Activated CD4-positive, alpha-beta memory T cell treated with anti-CD3 and anti-CD28 coated beads for 36 hours (primary cell): ENCODE measurements at regions of chr20 and their contacts with region 1.

Region 1: GRCh38 chr20:3010985-3011723 is 32.3 kb upstream of the GNRH2 start:
- DNase-seq: peak; percentile 49
- H3K4me3 Mint-ChIP-seq: no peak overlapping the region
- H3K27ac Mint-ChIP-seq: peak overlapping the region; percentile 97
- H3K4me1 Mint-ChIP-seq: peaks cover 65% of the 10 kb centered on the region
- H3K27me3 Mint-ChIP-seq: no peaks in the 10 kb centered on the region

Region 2: DNA sequence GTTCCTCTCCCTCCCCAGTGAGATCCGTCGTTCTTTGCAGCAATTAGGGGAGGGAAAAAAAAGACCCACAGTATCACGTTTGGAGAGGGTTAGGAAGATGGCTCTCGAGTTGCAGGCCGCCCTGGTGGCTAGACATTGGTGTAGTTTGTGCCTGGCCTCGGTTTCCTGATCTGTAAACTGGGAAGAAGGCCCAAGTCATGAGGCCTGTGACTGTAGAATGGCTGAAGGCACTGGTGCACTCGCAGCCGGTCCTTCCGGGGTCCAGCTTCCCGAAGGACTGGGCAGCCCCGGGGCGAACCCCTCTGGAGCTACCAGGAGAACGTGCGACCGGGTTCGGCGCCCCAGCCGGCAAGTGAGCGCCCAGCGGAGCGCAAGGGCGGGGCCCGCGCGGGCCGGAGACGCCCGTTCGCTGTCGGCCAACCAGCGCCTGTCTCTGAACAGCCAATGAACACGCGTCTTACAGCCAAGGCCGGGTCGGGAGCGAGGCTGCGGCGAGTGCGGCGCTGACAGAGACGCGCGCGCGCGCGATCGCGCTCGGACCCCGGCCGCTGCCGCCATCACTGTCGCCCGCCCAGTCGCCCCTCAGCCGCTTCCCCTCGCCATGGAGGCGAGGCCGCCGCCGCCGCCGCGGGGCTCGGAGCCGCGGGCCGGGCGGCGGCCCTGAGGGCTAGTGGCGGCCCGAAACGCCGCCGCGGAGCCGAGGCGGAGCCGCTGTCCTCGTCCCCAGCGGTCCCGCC is 138.0 kb before region 1 on chr20 and contains the start of gene PTPRA:
- CTCF ChIA-PET with region 1: interaction called, 3 read pairs
- POLR2A ChIA-PET with region 1: interaction called, 10 read pairs
- intact Hi-C with region 1: loop called (anchors 1 kb)
- DNase-seq: peak; percentile 95
- H3K4me3 Mint-ChIP-seq: peak within 1 kb of the TSS; percentile 90
- H3K27ac Mint-ChIP-seq: peak within 1 kb of the TSS; percentile 91
- H3K4me1 Mint-ChIP-seq: peaks cover 43% of the 10 kb centered on the region
- H3K27me3 Mint-ChIP-seq: no peaks in the 10 kb centered on the region
- total RNA-seq, gene PTPRA: 61.1 to 62.8 TPM

Region 3: DNA sequence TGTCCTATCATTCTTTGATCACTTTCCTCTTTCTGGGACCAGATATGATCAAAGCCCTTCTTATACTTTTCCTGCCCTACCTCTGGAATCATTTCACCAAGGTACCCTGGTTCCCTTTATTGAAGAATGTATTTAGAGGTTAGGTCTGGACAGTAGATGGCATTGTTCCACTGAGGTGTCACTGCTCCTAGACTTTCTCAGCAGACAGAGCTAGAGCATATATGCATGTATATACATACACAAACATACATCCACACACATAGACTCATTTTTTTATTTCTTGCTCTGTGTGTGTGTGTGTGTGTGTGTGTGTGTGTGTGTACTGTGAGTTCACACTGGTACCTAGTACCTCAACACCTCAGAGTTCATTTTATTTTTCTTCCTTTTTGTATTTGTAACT is 97.0 kb before region 1 on chr20:
- CTCF ChIA-PET with region 1: no interaction called
- POLR2A ChIA-PET with region 1: interaction called, 3 read pairs
- intact Hi-C with region 1: loop called (anchors 1 kb)
- DNase-seq: no peak
- H3K4me3 Mint-ChIP-seq: no peak overlapping the region
- H3K27ac Mint-ChIP-seq: no peak overlapping the region
- H3K4me1 Mint-ChIP-seq: peaks cover 20% of the 10 kb centered on the region
- H3K27me3 Mint-ChIP-seq: no peaks in the 10 kb centered on the region

Region 4: DNA sequence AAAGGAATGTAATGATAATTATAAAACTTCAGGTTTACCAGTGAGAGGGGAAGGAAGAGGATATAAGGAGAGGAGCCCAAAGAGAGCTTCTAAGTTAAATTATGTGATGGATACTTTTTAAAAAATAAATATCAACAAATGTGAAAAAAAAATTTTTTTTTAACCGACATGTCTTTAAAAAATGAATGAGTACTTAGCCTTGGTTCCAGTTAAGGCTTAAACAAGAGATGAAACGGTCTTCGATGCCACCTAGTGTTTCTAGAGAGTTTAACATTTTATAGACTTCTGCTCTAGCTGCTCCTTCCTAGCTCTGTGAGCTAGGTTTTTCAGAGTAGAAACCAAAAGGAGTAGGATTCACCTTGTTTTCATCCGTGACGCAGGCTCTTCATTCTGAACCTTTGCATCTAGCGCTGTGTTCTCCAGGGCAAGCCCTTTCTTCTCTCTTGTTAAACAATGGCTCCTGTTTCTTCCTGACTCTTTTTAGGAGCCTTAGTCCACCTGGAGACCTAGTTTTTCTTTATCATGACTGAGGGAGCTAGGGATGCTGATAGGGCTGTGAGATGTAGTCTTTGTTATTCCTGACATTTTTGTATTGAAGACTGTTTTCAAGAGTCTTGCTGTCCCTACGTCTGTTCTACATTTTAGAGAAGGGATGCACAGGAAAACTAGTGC is 10.2 kb before region 1 on chr20:
- CTCF ChIA-PET with region 1: interaction called, 18 read pairs
- POLR2A ChIA-PET with region 1: no interaction called
- intact Hi-C with region 1: no loop called
- DNase-seq: no peak
- H3K4me3 Mint-ChIP-seq: no peak overlapping the region
- H3K27ac Mint-ChIP-seq: peak overlapping the region; percentile 51
- H3K4me1 Mint-ChIP-seq: peaks cover 9% of the 10 kb centered on the region
- H3K27me3 Mint-ChIP-seq: no peaks in the 10 kb centered on the region

Region 5: GRCh38 chr20:3032624-3033023 is 21.5 kb after region 1 on chr20:
- CTCF ChIA-PET with region 1: interaction called, 3 read pairs
- POLR2A ChIA-PET with region 1: interaction called, 26 read pairs
- intact Hi-C with region 1: loop called (anchors 1 kb)
- DNase-seq: no peak
- H3K4me3 Mint-ChIP-seq: no peak overlapping the region
- H3K27ac Mint-ChIP-seq: no peak overlapping the region
- H3K4me1 Mint-ChIP-seq: peaks cover 13% of the 10 kb centered on the region
- H3K27me3 Mint-ChIP-seq: no peaks in the 10 kb centered on the region

Region 6: GRCh38 chr20:3045816-3046676 is 34.9 kb after region 1 on chr20 and contains the start of gene MRPS26:
- CTCF ChIA-PET with region 1: interaction called, 5 read pairs
- POLR2A ChIA-PET with region 1: interaction called, 10 read pairs
- intact Hi-C with region 1: loop called (anchors 1 kb)
- DNase-seq: peak; percentile 89
- H3K4me3 Mint-ChIP-seq: peak within 1 kb of the TSS; percentile 97
- H3K27ac Mint-ChIP-seq: peak within 1 kb of the TSS; percentile 89
- H3K4me1 Mint-ChIP-seq: peaks cover 33% of the 10 kb centered on the region
- H3K27me3 Mint-ChIP-seq: no peaks in the 10 kb centered on the region
- total RNA-seq, gene MRPS26: 155 to 158 TPM

Region 7: DNA sequence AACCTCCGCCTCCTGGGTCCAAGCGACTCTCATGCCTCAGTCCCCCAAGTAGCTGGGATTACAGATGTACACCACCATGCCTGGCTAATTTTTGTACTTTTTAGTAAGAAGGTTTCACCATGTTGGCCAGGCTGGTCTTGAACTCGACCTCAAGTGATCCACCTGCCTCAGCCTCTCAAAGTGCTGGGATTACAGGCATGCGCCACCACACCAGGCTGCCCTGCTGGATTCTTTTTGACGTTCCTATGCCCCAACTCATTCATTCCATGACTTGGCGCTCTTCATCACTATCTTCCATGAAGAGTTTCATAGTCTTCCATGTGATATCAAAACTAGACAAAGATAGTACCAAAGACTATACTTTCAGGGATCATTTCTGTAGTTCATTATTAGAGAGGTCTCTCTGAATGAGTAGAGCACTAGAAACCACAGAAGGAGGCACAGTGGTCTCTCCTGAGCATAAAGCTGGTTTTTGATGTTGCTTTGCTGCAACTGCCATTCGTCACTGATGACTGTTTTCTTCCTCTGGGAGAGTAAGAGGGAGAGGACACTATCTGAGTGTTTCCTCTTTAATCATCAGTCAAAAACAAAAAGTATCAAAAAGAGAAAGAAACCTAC is 372.8 kb after region 1 on chr20:
- CTCF ChIA-PET with region 1: no interaction called
- POLR2A ChIA-PET with region 1: no interaction called
- intact Hi-C with region 1: loop called (anchors 1 kb)
- DNase-seq: peak; percentile 72
- H3K4me3 Mint-ChIP-seq: no peak overlapping the region
- H3K27ac Mint-ChIP-seq: peak overlapping the region; percentile 70
- H3K4me1 Mint-ChIP-seq: peaks cover 18% of the 10 kb centered on the region
- H3K27me3 Mint-ChIP-seq: no peaks in the 10 kb centered on the region